Heart right ventricle (tissue), 16 donors: ENCODE measurements at regions of chr2 and their contacts with region 1.

Region 1: GRCh38 chr2:230987137-230988020 is 8.5 kb upstream of the SPATA3 start:
- DNase-seq: peak; percentile 69 to 83
- ATAC-seq: peak; percentile 70 to 92 (median 89)
- H3K4me3 ChIP-seq: peak overlapping the region in 9 of 10 donors; percentile 1 to 45 (median 40)
- H3K27ac ChIP-seq: no peak overlapping the region
- H3K4me1 ChIP-seq: peaks cover 0 to 6% (median 4%) of the 10 kb centered on the region in 9 donors
- H3K27me3 ChIP-seq: peaks cover 14 to 50% (median 40%) of the 10 kb centered on the region in 7 donors
- CTCF ChIP-seq: peak; percentile 89 to 97 (median 95)

Region 2: GRCh38 chr2:230552181-230552580 is 435.2 kb before region 1 on chr2:
- intact Hi-C with region 1: no loop called
- DNase-seq: no peak
- ATAC-seq: no peak
- H3K4me3 ChIP-seq: no peak overlapping the region
- H3K27ac ChIP-seq: no peak overlapping the region
- H3K4me1 ChIP-seq: no peaks in the 10 kb centered on the region
- H3K27me3 ChIP-seq: peaks cover 0 to 5% (median 0%) of the 10 kb centered on the region in 7 donors
- CTCF ChIP-seq: no peak

Region 3: GRCh38 chr2:230847883-230848388 is 139.4 kb before region 1 on chr2:
- intact Hi-C with region 1: loop called in 5 of 10 experiments (anchors 1 to 5 kb)
- DNase-seq: peak; percentile 87 to 89
- ATAC-seq: peak; percentile 83 to 97 (median 89)
- H3K4me3 ChIP-seq: peak overlapping the region in 5 of 10 donors; percentile 4 to 31 (median 23)
- H3K27ac ChIP-seq: no peak overlapping the region
- H3K4me1 ChIP-seq: peaks cover 0 to 10% (median 0%) of the 10 kb centered on the region in 9 donors
- H3K27me3 ChIP-seq: peaks cover 0 to 55% (median 32%) of the 10 kb centered on the region in 7 donors
- CTCF ChIP-seq: peak; percentile 76 to 96 (median 89)

Region 4: DNA sequence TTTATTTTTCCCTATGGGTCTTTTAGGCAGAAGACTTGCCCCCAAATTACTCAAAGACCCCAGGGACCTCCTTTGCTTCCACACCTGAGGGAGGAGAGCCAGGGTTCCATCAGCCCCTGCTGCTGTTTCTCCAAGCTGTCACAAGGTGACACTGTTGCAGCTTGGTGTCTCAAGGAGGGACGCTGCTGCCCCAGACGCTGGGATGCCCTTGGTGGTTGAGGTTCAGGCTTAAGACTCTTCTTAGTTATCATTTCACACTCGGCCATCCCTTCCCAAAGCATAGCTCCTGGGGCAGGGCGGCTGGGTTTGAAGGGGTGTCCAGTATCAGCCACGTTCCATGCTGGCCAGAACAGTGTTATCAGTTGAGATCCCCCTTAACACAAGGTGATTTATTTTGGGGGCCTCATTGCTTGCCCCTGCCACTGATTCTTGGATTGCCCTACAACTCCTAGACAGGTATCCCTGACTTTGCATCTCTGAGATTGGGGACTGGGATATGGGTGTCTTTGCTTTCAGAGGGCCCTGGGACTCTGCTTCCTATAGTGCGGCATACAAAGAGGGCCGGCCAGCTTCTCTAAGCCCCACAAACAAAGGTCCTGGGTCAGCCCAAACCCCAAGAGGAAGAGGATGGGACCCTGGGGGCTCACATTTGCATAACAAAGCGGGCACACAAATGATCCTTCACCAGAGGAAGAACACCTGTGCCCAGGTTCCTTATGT is 85.0 kb before region 1 on chr2:
- intact Hi-C with region 1: loop called (anchors 1 to 10 kb)
- DNase-seq: no peak
- ATAC-seq: peak in 4 of 8 donors; percentile 52 to 72 (median 64)
- H3K4me3 ChIP-seq: no peak overlapping the region
- H3K27ac ChIP-seq: no peak overlapping the region
- H3K4me1 ChIP-seq: peaks cover 0 to 11% (median 0%) of the 10 kb centered on the region in 9 donors
- H3K27me3 ChIP-seq: peaks cover 0 to 20% (median 0%) of the 10 kb centered on the region in 7 donors
- CTCF ChIP-seq: peak in 8 of 9 donors; percentile 41 to 95 (median 68)